PC-3 (cell line): ENCODE measurements at regions of chr13 and their contacts with region 1.

Region 1: GRCh38 chr13:80873589-80873988 is 532.7 kb upstream of the SPRY2 start:
- DNase-seq: peak; percentile 7
- ATAC-seq: no peak
- H3K4me3 ChIP-seq: no peak overlapping the region
- H3K27ac ChIP-seq: no peak overlapping the region
- H3K4me1 ChIP-seq: peaks cover 3% of the 10 kb centered on the region; the same call in 1 of the 2 replicates
- H3K27me3 ChIP-seq: no peaks in the 10 kb centered on the region
- CTCF ChIP-seq: no peak

Region 2: DNA sequence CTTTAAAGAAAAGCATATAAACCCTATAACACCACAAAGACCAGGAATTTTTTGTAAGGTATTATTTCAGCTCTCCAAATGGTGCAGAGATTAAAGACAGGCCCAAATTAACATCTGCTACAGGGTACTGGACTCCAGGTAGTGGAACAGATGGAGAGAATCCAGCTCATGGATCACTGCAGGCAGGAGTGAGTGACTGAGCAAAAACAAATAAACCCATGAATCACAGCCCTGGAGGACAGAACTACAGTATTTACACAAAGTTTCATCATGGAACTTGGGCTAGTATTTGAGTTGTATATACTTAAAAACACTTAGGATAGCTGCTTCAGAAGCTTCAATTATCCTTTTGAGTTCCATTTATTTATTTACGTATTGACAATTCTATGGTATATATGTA is 399.9 kb before region 1 on chr13:
- CTCF ChIA-PET with region 1: no interaction called
- POLR2A ChIA-PET with region 1: no interaction called
- intact Hi-C with region 1: loop called (anchors 1 kb)
- DNase-seq: peak; percentile 82
- ATAC-seq: peak; percentile 95
- H3K4me3 ChIP-seq: no peak overlapping the region
- H3K27ac ChIP-seq: peak overlapping the region; percentile 60
- H3K4me1 ChIP-seq: peaks cover 35% of the 10 kb centered on the region
- H3K27me3 ChIP-seq: no peaks in the 10 kb centered on the region
- CTCF ChIP-seq: no peak

Region 3: GRCh38 chr13:80551650-80552497 is 321.7 kb before region 1 on chr13:
- CTCF ChIA-PET with region 1: no interaction called
- POLR2A ChIA-PET with region 1: no interaction called
- intact Hi-C with region 1: loop called (anchors 10 kb)
- DNase-seq: peak; percentile 44
- ATAC-seq: peak; percentile 78
- H3K4me3 ChIP-seq: no peak overlapping the region; the same call in 1 of the 2 replicates
- H3K27ac ChIP-seq: peak overlapping the region; percentile 45
- H3K4me1 ChIP-seq: peaks cover 22% of the 10 kb centered on the region
- H3K27me3 ChIP-seq: no peaks in the 10 kb centered on the region
- CTCF ChIP-seq: no peak

Region 4: GRCh38 chr13:80798576-80799133 is 74.9 kb before region 1 on chr13:
- CTCF ChIA-PET with region 1: no interaction called
- POLR2A ChIA-PET with region 1: no interaction called
- intact Hi-C with region 1: no loop called
- DNase-seq: no peak
- ATAC-seq: no peak
- H3K4me3 ChIP-seq: no peak overlapping the region
- H3K27ac ChIP-seq: no peak overlapping the region
- H3K4me1 ChIP-seq: no peaks in the 10 kb centered on the region
- H3K27me3 ChIP-seq: no peaks in the 10 kb centered on the region
- CTCF ChIP-seq: no peak

Region 5: GRCh38 chr13:80945328-80945727 is 71.7 kb after region 1 on chr13:
- CTCF ChIA-PET with region 1: no interaction called
- POLR2A ChIA-PET with region 1: no interaction called
- intact Hi-C with region 1: loop called (anchors 1 kb)
- DNase-seq: no peak
- ATAC-seq: peak; percentile 72
- H3K4me3 ChIP-seq: no peak overlapping the region
- H3K27ac ChIP-seq: no peak overlapping the region
- H3K4me1 ChIP-seq: no peaks in the 10 kb centered on the region; the same call in 1 of the 2 replicates
- H3K27me3 ChIP-seq: no peaks in the 10 kb centered on the region
- CTCF ChIP-seq: no peak

Region 6: DNA sequence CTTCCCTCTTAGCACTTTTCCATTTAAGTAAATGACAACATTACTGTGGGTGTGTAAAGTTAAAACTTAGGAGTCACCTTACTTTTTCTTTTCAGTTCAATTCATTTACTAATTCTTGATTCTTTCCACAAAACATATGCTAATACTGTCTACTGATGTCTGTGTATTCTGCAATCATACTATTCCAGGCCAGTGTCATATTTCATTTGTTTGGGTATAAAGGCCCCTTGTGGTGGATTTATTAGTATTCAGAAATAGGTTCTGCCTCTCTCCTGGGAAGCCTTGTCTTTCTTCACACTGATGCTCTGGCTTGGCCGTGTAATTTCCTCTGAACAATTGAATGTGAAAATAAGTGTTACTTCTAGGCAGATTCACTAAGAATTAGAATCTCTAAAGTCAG is 89.3 kb after region 1 on chr13:
- CTCF ChIA-PET with region 1: no interaction called
- POLR2A ChIA-PET with region 1: no interaction called
- intact Hi-C with region 1: loop called (anchors 1 kb)
- DNase-seq: peak; percentile 21
- ATAC-seq: peak; percentile 85
- H3K4me3 ChIP-seq: no peak overlapping the region
- H3K27ac ChIP-seq: 0 out of 2 replicates have a peak overlapping the region, but pooled peaks have one; percentile 9
- H3K4me1 ChIP-seq: peaks cover 14% of the 10 kb centered on the region
- H3K27me3 ChIP-seq: no peaks in the 10 kb centered on the region
- CTCF ChIP-seq: peak; percentile 17; the same call in 1 of the 2 replicates